ENCODE measurements at regions of chr18 and their contacts with region 1.

Region 1: GRCh38 chr18:39259736-39260135 is 1694.1 kb upstream of the CELF4 start:
- DNase-seq: no peak

Region 2: DNA sequence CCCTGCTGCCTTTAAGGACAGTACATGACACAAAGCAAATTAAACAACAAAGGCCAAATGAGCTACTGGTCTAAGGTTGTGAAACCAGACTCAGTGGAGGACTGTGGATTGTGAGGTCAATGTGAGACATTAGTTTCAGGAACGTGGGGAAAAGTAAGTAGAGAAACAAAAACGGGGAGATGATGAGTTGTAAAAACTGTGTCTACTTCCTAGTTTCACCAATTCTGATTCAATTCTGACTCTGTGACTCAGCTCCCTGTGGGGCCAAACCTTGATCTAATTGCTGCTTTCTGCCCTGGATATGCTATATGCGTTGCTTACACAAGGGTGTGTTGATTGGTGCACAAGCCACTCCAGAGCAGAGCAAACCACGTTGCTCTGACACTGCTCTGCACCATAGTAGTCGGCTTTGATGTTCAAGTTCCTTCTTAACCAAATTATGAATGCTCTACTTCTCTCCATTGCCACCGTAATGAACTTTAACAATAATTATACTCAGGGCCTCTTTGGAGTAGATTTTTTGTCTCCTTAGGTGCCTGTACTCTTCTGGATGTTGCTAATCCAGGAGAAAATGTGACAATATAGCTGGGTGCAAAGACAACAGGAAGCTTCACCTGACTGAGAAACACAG is 54.1 kb before region 1 on chr18:
- intact Hi-C with region 1: loop called (anchors 10 kb)
- DNase-seq: no peak

Measured in posterior cingulate gyrus (tissue), 11 donors.